ENCODE measurements at regions of chr2 and their contacts with region 1.

Region 1: DNA sequence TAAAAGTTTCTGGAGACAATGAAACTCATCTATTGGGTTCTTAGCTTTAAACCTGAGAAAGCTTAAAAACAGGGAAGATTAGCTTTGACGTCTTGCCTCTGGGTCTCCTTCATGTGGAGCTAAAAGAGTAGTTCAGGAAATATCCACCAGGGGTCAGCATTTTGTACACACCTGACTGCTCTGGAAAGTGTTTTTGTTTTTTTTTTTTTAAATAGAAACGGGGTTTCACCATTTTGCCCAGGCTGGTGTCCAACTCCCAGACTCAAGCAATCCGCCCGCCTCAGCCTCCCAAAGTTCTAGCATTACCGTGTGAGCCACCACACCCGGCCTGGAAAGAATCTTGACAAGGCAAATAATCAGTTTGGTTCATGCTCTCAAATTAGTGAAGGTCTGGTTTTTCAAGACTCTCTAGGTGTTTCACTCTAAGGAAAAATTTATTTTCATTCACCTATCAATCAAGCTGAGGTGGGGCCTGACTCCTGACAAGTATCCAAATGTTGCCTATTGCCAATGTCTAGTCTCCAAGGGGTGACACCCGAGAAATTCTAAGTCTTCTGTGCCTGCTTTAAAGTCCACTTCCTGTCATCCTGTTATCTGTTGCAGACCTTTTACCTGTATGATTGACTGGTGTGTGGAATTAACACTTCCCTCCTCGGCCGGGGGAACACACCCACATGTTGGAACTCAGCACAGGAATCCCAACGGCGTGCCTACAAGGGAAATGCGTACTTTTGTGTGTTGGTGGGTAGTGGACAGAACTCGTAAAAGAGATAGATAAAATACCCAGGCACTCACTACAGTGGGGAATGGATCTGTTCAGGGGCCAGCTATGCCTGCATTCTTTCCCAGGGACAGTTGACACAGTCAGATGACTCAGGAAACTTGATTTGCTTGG is 11.3 kb downstream of the IL1RN start:
- DNase-seq: peak; percentile 56
- ATAC-seq: peak; percentile 82
- H3K4me3 Mint-ChIP-seq: no peak overlapping the region
- H3K27ac Mint-ChIP-seq: peak overlapping the region; percentile 71
- H3K4me1 Mint-ChIP-seq: peaks cover 24% of the 10 kb centered on the region
- H3K27me3 Mint-ChIP-seq: no peaks in the 10 kb centered on the region

Region 2: GRCh38 chr2:112636231-112636960 is 502.3 kb before region 1 on chr2:
- CTCF ChIA-PET with region 1: no interaction called
- POLR2A ChIA-PET with region 1: no interaction called
- intact Hi-C with region 1: no loop called
- DNase-seq: peak; percentile 54
- ATAC-seq: peak; percentile 46
- H3K4me3 Mint-ChIP-seq: no peak overlapping the region
- H3K27ac Mint-ChIP-seq: no peak overlapping the region
- H3K4me1 Mint-ChIP-seq: peaks cover 71% of the 10 kb centered on the region
- H3K27me3 Mint-ChIP-seq: no peaks in the 10 kb centered on the region

Region 3: DNA sequence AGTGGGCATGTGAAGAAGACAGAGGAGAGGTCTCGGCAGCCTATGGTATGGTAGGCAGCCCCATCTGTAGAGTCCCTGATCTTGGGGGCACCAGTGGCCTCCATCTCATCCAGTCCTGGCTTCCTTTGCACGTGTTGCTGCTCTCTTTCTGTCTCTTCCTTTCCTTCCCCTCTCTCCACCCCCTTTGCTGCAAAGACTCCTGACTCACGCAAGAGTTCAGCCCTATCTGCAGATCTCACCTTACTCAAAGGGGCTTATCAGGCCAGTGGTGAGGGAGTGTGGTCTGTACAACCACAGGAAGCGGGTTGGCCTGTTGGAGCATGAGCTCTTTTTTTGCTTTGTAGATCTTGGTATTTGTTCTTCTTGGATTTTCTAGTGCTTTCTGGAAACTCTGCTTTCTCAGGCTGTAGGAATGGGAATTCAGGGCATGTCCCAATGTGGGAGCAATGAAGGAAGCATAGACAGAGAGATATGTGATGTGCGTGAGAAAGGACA is 432.5 kb before region 1 on chr2:
- CTCF ChIA-PET with region 1: no interaction called
- POLR2A ChIA-PET with region 1: no interaction called
- intact Hi-C with region 1: no loop called
- DNase-seq: peak; percentile 78
- ATAC-seq: peak; percentile 93
- H3K4me3 Mint-ChIP-seq: no peak overlapping the region
- H3K27ac Mint-ChIP-seq: no peak overlapping the region
- H3K4me1 Mint-ChIP-seq: peaks cover 31% of the 10 kb centered on the region
- H3K27me3 Mint-ChIP-seq: peaks cover 11% of the 10 kb centered on the region

Region 4: GRCh38 chr2:113098041-113098440 is 40.6 kb before region 1 on chr2:
- CTCF ChIA-PET with region 1: interaction called, 16 read pairs
- POLR2A ChIA-PET with region 1: no interaction called
- intact Hi-C with region 1: no loop called
- DNase-seq: peak; percentile 38
- ATAC-seq: peak; percentile 89
- H3K4me3 Mint-ChIP-seq: peak overlapping the region; percentile 56
- H3K27ac Mint-ChIP-seq: peak overlapping the region; percentile 69
- H3K4me1 Mint-ChIP-seq: peaks cover 35% of the 10 kb centered on the region
- H3K27me3 Mint-ChIP-seq: peaks cover 1% of the 10 kb centered on the region

Region 5: GRCh38 chr2:113148606-113149560 is 10.2 kb after region 1 on chr2:
- CTCF ChIA-PET with region 1: interaction called, 11 read pairs
- POLR2A ChIA-PET with region 1: no interaction called
- intact Hi-C with region 1: no loop called
- DNase-seq: no peak
- ATAC-seq: no peak
- H3K4me3 Mint-ChIP-seq: no peak overlapping the region
- H3K27ac Mint-ChIP-seq: no peak overlapping the region
- H3K4me1 Mint-ChIP-seq: no peaks in the 10 kb centered on the region
- H3K27me3 Mint-ChIP-seq: no peaks in the 10 kb centered on the region

Region 6: DNA sequence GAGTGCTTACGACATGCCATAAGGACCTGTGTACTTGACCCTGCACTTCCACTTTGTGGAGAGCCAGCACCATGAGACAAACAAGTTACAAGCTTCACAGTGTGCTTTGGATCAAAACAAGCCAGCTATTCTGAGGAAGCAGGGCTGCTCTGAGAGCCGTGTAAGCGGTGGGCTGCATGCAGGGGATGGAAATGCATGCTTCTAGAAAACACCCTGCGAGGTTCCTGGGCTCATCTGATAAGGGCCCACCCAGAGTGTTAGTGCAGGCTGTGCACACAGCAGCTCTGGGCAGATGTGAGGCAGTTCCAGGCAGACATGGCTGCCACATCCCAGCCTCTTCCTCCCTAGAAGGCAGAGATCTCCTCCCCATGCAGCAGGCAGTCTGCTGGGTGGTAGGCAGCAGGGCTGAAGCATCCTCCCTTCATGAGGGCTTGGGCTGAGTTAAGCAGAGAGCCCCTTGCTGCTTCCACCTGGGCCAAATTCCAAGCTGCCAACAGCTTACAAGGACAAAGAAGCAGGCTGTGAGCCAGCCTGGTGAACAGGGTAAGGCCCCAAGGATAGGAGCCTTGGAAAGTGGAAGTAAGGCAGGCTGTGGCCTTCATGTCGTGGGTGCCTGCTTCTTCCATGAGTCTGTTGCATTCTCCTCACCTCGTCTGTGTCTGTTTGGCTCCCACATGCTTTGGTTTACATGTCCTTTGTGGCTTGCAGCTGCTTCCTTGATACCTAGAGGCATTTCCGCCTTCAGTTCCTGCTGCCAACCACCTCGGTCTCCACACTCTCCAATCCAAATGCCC is 42.8 kb after region 1 on chr2:
- CTCF ChIA-PET with region 1: interaction called, 95 read pairs
- POLR2A ChIA-PET with region 1: no interaction called
- intact Hi-C with region 1: loop called in 1 of 2 experiments (anchors 1 kb)
- DNase-seq: no peak
- ATAC-seq: no peak
- H3K4me3 Mint-ChIP-seq: peak overlapping the region; percentile 32
- H3K27ac Mint-ChIP-seq: peak overlapping the region; percentile 85
- H3K4me1 Mint-ChIP-seq: peaks cover 91% of the 10 kb centered on the region
- H3K27me3 Mint-ChIP-seq: no peaks in the 10 kb centered on the region

Region 7: GRCh38 chr2:113240150-113240862 is 101.6 kb after region 1 on chr2:
- CTCF ChIA-PET with region 1: interaction called, 12 read pairs
- POLR2A ChIA-PET with region 1: no interaction called
- intact Hi-C with region 1: loop called in 1 of 2 experiments (anchors 2 kb)
- DNase-seq: peak; percentile 31
- ATAC-seq: peak; percentile 64
- H3K4me3 Mint-ChIP-seq: no peak overlapping the region
- H3K27ac Mint-ChIP-seq: peak overlapping the region; percentile 79
- H3K4me1 Mint-ChIP-seq: peaks cover 23% of the 10 kb centered on the region
- H3K27me3 Mint-ChIP-seq: no peaks in the 10 kb centered on the region

Region 8: DNA sequence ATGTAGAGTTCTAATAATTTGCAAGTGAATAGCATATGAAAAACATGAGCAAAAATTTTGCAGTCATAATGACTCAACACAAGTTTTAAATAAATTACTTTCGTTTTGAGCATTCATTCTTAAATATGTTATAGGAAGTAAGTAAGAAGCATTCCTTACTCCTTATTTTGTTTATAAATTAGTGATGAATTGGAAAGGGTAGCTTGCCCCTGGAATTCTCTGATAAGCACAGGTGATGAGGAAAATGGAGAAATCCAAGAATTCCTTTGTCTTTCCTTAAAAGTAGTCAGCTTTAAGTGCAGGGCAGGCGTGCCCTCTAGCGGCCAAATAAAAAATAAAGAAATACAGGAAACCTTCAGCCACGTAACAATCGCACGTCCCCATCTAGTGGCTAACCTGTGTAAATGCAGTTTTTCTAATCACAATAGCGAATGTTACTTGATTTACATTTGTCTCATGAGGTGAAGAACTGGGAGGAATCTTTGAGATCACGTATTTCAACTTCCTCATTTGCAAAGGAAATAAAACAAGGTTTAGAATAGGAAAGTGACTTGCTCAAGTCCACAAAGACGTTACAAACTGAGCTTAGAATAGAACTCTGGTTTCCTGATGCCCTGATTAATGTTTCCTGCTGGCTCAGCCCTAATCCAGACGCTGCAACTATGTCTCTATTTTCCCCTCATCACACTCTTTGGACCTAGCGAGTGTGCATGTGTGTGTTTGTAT is 251.6 kb after region 1 on chr2:
- CTCF ChIA-PET with region 1: interaction called, 25 read pairs
- POLR2A ChIA-PET with region 1: no interaction called
- intact Hi-C with region 1: loop called (anchors 1 to 5 kb)
- DNase-seq: peak; percentile 71
- ATAC-seq: peak; percentile 85
- H3K4me3 Mint-ChIP-seq: peak overlapping the region; percentile 52
- H3K27ac Mint-ChIP-seq: peak overlapping the region; percentile 27
- H3K4me1 Mint-ChIP-seq: peaks cover 12% of the 10 kb centered on the region
- H3K27me3 Mint-ChIP-seq: peaks cover 5% of the 10 kb centered on the region

Region 9: DNA sequence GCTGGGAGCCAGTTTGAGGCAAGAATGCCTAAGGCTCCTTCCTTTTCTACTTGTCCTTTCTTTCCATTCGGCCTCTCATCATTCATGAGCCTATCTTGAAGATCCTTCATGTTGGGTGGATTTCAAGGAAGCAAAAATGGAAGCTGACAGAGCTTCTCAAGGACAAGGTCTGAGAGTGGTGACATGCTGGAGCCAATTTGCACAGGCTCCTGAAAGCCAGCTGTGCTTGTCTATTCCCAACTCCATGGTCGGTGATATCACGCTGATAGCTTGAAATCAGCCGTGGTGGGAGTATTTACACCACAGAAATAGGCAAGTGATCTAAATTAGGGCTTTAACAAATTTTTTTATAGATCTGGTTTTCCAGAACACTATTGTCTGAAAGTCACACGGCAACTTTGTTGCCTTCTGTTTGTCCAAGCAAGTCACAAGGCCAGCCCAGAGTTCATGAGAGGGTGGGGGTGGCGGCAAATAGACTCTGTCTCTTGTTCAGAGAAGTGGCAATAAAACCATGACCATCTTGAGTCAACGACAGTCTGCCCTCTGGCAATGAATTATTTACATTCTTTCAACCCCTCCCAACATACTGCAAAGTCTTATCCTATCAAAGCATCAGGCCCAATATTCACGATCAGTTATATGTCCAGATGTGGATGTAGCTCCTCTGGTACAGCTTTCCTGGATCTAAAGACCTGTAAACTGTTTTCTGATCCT is 667.7 kb after region 1 on chr2:
- CTCF ChIA-PET with region 1: no interaction called
- POLR2A ChIA-PET with region 1: no interaction called
- intact Hi-C with region 1: no loop called
- DNase-seq: no peak
- ATAC-seq: no peak
- H3K4me3 Mint-ChIP-seq: no peak overlapping the region
- H3K27ac Mint-ChIP-seq: no peak overlapping the region
- H3K4me1 Mint-ChIP-seq: no peaks in the 10 kb centered on the region
- H3K27me3 Mint-ChIP-seq: no peaks in the 10 kb centered on the region

Region 10: DNA sequence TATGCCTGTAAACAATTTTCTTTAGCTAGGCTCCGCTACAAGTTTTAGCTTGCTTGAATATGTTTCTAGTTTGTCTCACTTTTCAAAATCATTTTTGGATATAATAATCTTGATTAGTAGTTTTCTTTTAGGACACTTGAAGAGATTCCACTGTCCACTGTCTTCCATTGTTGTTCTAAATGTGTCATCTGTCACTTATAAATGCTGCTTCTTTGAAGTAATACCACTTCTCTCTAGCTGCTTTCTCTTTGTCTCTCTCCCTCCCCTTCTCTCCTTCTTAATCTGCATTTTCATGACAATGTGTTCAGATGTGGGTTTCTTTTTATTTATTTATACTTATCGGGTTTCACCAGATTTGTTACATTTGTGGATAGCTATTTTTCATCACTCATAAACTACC is 1230.0 kb after region 1 on chr2:
- CTCF ChIA-PET with region 1: no interaction called
- POLR2A ChIA-PET with region 1: no interaction called
- intact Hi-C with region 1: no loop called
- DNase-seq: no peak
- ATAC-seq: no peak
- H3K4me3 Mint-ChIP-seq: no peak overlapping the region
- H3K27ac Mint-ChIP-seq: no peak overlapping the region
- H3K4me1 Mint-ChIP-seq: no peaks in the 10 kb centered on the region
- H3K27me3 Mint-ChIP-seq: no peaks in the 10 kb centered on the region

Measured in activated CD4-positive, alpha-beta T cell treated with anti-CD3 and anti-CD28 coated beads for 36 hours (primary cell).